IMR-90 (cell line): ENCODE measurements at regions of chr21 and their contacts with region 1.

Region 1: DNA sequence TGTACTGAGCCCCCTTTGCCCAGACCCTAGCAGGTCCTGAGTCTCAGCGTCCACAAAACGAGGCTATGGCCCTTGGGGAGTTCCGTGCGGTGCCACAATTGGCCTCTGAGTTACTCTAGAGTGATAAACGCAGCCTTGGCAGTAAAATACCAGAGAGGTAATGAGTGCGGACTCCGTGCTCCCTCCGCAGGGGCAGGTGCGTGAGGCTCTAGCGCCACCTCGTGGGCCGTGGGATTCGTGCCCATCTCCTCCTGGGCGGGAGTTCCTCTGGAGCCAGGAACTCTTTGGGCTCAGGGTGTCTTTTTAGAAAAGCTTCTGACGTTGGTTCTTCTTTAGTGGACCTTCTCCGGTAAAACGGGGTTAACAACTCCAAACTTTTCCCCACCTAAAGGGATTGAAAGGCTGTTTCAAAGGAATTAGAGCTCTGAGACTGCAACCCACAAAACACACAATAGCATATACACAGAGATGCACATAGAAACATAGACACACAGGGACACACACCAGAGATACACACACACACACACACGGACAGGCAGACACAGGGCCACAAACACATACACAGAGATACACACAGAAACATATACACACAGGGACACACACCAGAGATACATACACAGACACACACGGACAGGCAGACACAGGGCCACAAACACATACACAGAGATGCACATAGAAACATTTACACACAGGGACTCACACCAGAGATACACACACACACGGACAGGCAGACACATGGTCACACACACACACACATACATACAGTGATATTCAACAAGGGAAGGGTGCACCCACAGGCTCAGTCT is 99.4 kb downstream of the KCNJ15 start:
- DNase-seq: peak; percentile 61
- ATAC-seq: peak; percentile 79
- H3K4me3 ChIP-seq: no peak overlapping the region
- H3K27ac ChIP-seq: no peak overlapping the region
- H3K4me1 ChIP-seq: peaks cover 11% of the 10 kb centered on the region
- H3K27me3 ChIP-seq: peaks cover 16% of the 10 kb centered on the region
- CTCF ChIP-seq: peak; percentile 99
- POLR2A ChIP-seq: peak; percentile 55; the same call in 1 of the 2 replicates
- RAD21 ChIP-seq: peak; percentile 100

Region 2: DNA sequence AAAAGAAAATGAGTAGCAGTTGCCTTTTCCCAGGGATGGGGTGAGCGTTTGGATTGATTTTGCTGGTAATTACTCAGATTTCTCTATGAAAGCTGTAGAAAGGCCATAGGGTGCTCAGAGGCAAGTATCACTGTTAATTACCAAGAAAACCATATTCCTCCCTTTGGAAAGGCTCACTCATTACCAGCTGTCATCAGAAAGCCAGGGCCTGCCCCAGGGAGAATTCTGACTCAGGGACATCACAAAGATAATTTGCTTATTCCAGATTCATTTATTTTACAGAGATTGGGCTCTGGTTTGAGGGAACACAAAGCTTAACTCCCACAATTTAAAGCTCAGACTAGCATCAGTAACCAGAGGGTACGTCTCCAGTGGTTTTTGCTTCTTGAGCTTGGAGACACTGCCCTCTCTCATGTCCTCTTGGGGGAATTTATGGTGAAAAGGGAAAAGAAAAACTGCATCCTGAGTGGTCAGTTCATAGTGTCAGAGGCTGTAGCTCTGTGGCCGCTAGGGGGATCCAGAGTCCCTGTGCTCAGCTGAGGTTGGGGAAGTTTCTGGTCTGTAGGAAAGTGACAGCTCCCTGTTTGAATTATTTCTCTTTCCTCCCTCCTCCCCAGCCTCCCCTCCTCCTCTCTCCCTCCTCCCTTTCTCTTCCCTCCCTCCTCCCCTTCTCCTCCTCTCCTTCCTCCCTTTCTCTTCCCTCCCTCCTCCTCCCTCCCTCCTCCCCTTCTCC is 644.2 kb before region 1 on chr21:
- CTCF ChIA-PET with region 1: interaction called, 4 read pairs
- POLR2A ChIA-PET with region 1: no interaction called
- dilution Hi-C with region 1: no loop called
- in situ Hi-C with region 1: loop called (anchors 5 kb)
- intact Hi-C with region 1: loop called (anchors 1 kb)
- DNase-seq: peak; percentile 73
- ATAC-seq: peak; percentile 97
- H3K4me3 ChIP-seq: no peak overlapping the region
- H3K27ac ChIP-seq: no peak overlapping the region
- H3K4me1 ChIP-seq: peaks cover 10% of the 10 kb centered on the region
- H3K27me3 ChIP-seq: peaks cover 3% of the 10 kb centered on the region
- CTCF ChIP-seq: peak; percentile 95
- POLR2A ChIP-seq: no peak
- RAD21 ChIP-seq: peak; percentile 94

Region 3: DNA sequence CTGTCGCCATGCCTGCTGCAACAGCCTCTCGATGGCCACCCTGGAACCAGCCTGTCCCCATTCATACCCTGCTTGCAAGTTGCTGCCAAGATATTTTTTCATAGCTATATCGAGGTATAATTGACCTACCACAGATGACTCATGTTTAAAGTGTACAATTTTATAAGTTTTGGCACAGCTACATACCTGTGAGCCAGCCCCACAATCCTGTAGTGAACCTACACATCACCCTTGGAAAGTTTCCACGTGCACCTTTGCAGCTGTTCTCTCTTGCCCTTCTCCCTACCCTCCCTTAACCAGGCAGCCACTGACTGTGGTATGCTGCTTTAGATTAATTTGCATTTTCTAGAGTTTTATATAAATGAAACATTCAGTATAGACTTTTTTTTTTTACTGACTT is 416.9 kb before region 1 on chr21:
- CTCF ChIA-PET with region 1: no interaction called
- POLR2A ChIA-PET with region 1: no interaction called
- dilution Hi-C with region 1: no loop called
- in situ Hi-C with region 1: loop called (anchors 25 kb)
- intact Hi-C with region 1: no loop called
- DNase-seq: no peak
- ATAC-seq: no peak
- H3K4me3 ChIP-seq: no peak overlapping the region
- H3K27ac ChIP-seq: no peak overlapping the region
- H3K4me1 ChIP-seq: no peaks in the 10 kb centered on the region
- H3K27me3 ChIP-seq: no peaks in the 10 kb centered on the region; the same call in 1 of the 2 replicates
- CTCF ChIP-seq: no peak
- POLR2A ChIP-seq: no peak
- RAD21 ChIP-seq: no peak

Region 4: GRCh38 chr21:38211321-38211720 is 144.9 kb before region 1 on chr21:
- CTCF ChIA-PET with region 1: interaction called, 8 read pairs
- POLR2A ChIA-PET with region 1: no interaction called
- dilution Hi-C with region 1: loop called (anchors 25 kb)
- in situ Hi-C with region 1: loop called (anchors 5 kb)
- intact Hi-C with region 1: no loop called
- DNase-seq: no peak
- ATAC-seq: no peak
- H3K4me3 ChIP-seq: no peak overlapping the region
- H3K27ac ChIP-seq: no peak overlapping the region
- H3K4me1 ChIP-seq: no peaks in the 10 kb centered on the region
- H3K27me3 ChIP-seq: peaks cover 30% of the 10 kb centered on the region
- CTCF ChIP-seq: no peak
- POLR2A ChIP-seq: no peak
- RAD21 ChIP-seq: no peak

Region 5: DNA sequence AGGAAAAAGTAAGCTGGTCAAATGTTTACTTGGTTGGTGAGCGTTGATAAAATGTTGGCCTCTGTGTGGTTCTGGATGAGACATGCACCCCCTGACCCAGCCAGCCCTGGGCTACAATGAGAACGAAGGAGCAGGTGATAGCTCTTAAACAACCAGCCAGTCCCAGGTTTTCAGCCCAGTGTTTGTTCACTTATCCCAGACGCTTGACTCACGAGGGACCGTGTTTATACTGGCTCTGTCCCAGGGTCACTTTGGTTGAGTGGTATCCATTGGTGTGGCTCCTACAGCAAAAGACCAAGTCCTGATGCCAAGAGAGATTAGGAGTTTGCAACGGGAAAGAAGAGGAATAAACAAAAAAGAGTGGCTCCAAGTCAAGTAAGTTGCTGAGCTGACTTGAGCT is 12.5 kb before region 1 on chr21:
- CTCF ChIA-PET with region 1: interaction called, 10 read pairs
- POLR2A ChIA-PET with region 1: interaction called, 3 read pairs
- dilution Hi-C with region 1: no loop called
- in situ Hi-C with region 1: no loop called
- intact Hi-C with region 1: no loop called
- DNase-seq: peak; percentile 49
- ATAC-seq: peak; percentile 46
- H3K4me3 ChIP-seq: no peak overlapping the region
- H3K27ac ChIP-seq: no peak overlapping the region
- H3K4me1 ChIP-seq: peaks cover 3% of the 10 kb centered on the region; the same call in 1 of the 2 replicates
- H3K27me3 ChIP-seq: no peaks in the 10 kb centered on the region
- CTCF ChIP-seq: no peak
- POLR2A ChIP-seq: no peak
- RAD21 ChIP-seq: no peak

Region 6: DNA sequence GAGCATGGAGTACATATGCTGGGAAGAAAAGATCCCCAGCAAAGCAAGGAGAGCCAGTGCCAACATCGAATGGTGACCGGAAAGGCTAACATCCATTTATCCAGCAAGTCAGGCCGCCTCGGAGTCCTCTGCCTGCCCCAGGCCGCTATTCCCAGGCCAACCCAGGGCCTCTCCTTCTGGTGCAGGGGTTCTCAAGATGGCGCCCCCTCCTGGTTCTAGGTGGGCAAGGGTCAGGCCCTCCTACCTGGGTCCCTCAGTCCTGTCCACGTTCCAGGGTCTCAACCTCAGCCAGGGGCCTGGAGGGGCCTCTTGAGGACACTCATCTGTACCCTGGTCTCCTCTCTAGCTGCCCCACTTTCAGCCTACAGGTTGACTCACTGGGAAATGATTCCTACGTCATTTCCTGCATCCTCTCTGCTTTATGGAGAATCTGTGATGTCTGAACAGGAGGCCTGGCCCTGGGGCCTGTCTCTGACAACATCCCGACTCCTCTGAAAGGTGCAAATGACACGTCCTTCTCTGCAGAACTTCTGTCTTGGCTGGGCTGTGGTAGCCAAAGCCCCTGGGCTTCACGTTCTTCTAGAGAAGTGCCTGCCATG is 681.7 kb after region 1 on chr21:
- CTCF ChIA-PET with region 1: no interaction called
- POLR2A ChIA-PET with region 1: no interaction called
- dilution Hi-C with region 1: no loop called
- in situ Hi-C with region 1: no loop called
- intact Hi-C with region 1: no loop called
- DNase-seq: peak; percentile 52
- ATAC-seq: no peak
- H3K4me3 ChIP-seq: no peak overlapping the region
- H3K27ac ChIP-seq: no peak overlapping the region; the same call in 1 of the 2 replicates
- H3K4me1 ChIP-seq: peaks cover 2% of the 10 kb centered on the region; the same call in 1 of the 2 replicates
- H3K27me3 ChIP-seq: no peaks in the 10 kb centered on the region
- CTCF ChIP-seq: no peak
- POLR2A ChIP-seq: no peak
- RAD21 ChIP-seq: no peak